MCF 10A (cell line): ENCODE measurements at regions of chr7 and their contacts with region 1.

Region 1: DNA sequence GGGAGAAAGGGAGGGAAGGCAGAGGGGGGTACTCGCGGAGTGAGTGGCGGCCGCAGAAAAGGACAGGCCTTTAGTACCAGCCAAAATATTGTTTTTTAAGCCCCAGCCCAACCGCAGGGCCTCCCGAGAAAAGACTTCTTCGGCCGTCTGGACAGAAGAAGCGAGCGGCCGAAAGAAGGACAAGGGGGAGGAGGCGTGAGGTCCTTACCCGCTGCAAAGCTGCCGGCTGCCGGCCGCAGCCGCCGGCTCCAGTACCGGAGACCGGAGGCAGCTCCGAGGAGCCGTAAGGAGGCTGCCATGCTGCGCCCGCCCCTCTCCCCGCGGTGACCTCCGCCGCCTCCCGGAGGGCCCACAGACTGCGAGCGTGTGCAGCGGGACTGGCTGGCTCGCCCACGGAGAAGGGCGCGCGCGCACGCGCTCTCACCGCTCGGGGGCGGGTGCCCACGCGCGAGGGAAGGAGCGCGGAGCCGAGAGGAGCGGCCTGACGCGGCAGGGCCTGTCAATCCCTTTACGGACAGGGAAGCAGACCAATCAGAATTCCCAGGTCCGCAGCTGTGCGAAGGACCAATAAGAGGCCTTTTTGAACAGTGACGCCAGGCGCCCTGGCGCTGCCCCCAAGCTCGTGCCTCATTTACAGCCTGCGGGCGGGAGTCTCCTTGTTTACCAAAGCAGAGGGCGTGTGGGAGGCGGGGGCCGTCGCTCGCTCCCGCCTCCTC is at the start of gene HIBADH:
- DNase-seq: peak; percentile 99
- H3K4me3 Mint-ChIP-seq: peak within 1 kb of the TSS; percentile 78
- H3K27ac Mint-ChIP-seq: peak within 1 kb of the TSS; percentile 82
- H3K4me1 Mint-ChIP-seq: no peaks in the 10 kb centered on the region
- H3K27me3 Mint-ChIP-seq: no peaks in the 10 kb centered on the region
- CTCF ChIP-seq: peak; percentile 16
- total RNA-seq, gene HIBADH: 51.5 and 61.1 TPM in 2 replicates

Region 2: GRCh38 chr7:27224983-27225934 is 437.4 kb before region 1 on chr7:
- CTCF ChIA-PET with region 1: no interaction called
- POLR2A ChIA-PET with region 1: no interaction called
- intact Hi-C with region 1: no loop called
- DNase-seq: no peak
- H3K4me3 Mint-ChIP-seq: no peak overlapping the region
- H3K27ac Mint-ChIP-seq: no peak overlapping the region
- H3K4me1 Mint-ChIP-seq: peaks cover 7% of the 10 kb centered on the region
- H3K27me3 Mint-ChIP-seq: no peaks in the 10 kb centered on the region
- CTCF ChIP-seq: no peak

Region 3: GRCh38 chr7:27605689-27606269 is 56.9 kb before region 1 on chr7:
- CTCF ChIA-PET with region 1: interaction called, 4 read pairs
- POLR2A ChIA-PET with region 1: interaction called, 10 read pairs
- intact Hi-C with region 1: no loop called
- DNase-seq: peak; percentile 38
- H3K4me3 Mint-ChIP-seq: no peak overlapping the region
- H3K27ac Mint-ChIP-seq: no peak overlapping the region
- H3K4me1 Mint-ChIP-seq: peaks cover 13% of the 10 kb centered on the region
- H3K27me3 Mint-ChIP-seq: no peaks in the 10 kb centered on the region
- CTCF ChIP-seq: peak; percentile 27

Region 4: DNA sequence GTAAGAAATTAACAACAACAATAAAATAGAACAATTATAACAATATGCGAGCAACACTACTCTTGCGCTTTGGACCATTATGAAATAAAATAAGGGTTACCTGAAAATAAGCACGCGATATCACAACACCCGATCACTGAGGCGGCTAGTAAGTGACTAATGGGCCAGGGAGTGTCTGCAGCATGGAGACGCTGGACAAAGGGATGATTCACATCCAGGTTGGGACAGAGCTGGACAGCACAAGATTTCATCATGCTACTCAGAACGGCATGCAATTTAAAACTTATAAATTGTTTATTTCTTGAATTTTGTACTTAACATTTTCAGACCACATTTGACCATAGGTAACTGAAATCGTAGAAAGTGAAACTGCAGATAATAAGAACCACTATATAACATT is 15.6 kb before region 1 on chr7:
- CTCF ChIA-PET with region 1: interaction called, 5 read pairs
- POLR2A ChIA-PET with region 1: interaction called, 72 read pairs
- intact Hi-C with region 1: no loop called
- DNase-seq: peak; percentile 95
- H3K4me3 Mint-ChIP-seq: peak overlapping the region; percentile 59
- H3K27ac Mint-ChIP-seq: peak overlapping the region; percentile 91
- H3K4me1 Mint-ChIP-seq: peaks cover 44% of the 10 kb centered on the region
- H3K27me3 Mint-ChIP-seq: no peaks in the 10 kb centered on the region
- CTCF ChIP-seq: no peak

Region 5: DNA sequence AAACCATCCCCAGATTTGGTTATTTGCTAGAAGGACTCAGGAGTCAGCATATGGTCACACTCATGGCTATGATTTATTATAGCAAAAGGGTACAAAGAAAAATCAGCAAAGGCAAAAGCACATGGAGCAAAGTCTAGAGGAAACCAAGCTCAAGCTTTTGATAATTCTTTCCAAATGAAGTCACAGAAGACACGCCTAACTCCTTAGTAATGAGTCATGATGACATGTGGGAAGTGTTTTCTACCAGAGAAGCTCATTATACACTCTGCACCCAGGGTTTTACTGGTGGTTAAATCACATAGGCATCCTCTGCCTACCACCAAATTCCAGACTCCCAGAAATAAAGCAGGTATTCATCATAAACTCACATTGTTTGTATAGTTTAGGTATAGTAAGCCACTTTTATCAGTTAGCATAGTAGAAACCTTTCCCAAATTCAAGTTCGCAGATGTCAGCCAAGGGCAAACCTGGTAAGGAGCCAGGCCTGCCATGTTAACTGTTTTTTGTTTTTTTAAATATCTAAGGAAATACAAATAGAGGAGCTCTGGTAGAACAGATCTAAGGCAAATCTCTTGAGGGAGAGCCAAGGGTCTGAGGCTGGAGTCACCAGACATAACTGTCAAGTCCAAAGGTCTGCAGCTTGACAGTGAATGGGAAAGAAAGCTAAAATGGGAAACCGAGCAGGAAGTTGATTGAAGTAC is 15.4 kb after region 1 on chr7:
- CTCF ChIA-PET with region 1: no interaction called
- POLR2A ChIA-PET with region 1: interaction called, 36 read pairs
- intact Hi-C with region 1: loop called (anchors 1 kb)
- DNase-seq: peak; percentile 78
- H3K4me3 Mint-ChIP-seq: peak overlapping the region; percentile 26
- H3K27ac Mint-ChIP-seq: peak overlapping the region; percentile 98
- H3K4me1 Mint-ChIP-seq: peaks cover 12% of the 10 kb centered on the region
- H3K27me3 Mint-ChIP-seq: no peaks in the 10 kb centered on the region
- CTCF ChIP-seq: no peak

Region 6: DNA sequence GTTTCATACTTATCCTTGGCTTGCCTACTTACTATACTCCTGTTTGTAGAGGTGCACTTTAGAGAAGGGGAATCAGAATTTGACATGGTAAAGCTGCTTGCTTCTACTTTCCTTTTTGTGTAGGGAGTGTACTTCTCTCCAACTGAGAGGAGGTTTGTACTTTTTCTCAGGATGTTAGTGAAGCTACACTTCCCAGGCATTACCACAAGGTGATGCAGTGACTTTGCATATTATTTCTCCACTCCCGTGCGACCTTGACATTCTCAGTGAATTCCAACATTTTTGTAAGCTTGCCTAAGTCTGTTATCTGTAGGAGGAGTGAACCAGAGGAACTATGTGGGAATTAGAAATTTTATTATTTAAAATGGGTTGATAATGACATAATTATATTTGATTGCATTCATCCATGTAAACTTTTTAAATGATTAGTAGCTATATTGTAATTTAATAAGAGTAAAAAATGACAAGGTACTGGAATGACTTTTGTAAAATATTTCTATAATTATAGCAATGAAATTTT is 82.5 kb after region 1 on chr7:
- CTCF ChIA-PET with region 1: interaction called, 5 read pairs
- POLR2A ChIA-PET with region 1: interaction called, 180 read pairs
- intact Hi-C with region 1: loop called (anchors 1 kb)
- DNase-seq: peak; percentile 62
- H3K4me3 Mint-ChIP-seq: no peak overlapping the region
- H3K27ac Mint-ChIP-seq: peak overlapping the region; percentile 77
- H3K4me1 Mint-ChIP-seq: peaks cover 32% of the 10 kb centered on the region
- H3K27me3 Mint-ChIP-seq: no peaks in the 10 kb centered on the region
- CTCF ChIP-seq: peak; percentile 63

Region 7: DNA sequence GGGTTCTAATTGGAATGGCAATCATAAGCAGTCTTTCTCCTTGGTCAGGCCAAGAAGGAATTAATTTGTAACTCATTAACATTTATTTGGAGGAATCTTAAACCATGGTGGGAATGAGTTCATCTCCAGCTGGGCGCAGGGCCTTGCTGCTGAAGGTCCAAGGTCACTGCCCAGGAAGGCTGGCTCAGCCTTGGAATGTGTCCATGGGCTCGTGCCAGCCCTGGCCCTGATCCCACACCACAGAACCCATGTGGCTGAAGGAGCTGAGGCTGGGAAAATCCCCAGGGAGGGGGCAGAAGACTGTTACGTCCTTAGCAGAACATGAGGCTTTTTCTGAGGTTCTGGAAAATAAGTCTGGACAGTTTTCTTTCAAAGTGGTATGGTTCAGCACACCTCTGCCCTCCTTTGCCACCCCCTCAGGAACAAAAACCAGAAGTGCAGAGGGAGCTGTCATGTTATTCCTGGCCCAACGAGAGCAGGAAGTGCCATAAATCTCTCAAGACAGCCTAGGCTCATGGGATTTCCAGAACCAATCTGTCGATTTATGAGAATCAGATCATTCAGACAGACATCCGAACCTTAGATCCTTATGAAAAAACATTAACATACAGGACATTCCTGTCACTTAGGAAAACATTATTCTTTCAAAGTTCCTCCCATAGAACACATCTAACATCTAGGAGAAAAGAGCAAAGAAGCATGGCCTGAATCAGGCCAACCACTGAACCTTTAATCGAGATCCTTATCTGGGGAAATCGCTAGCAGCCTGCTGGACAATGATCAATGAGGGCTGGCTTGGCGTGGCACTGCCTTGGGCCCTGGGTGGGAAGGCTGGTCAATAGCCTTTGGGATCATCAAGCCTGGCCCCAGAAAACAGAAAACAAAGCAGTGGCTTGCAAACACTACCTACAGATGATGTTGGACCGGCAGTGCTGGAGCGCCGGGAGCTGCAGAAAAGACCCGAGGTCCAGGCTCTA is 211.6 kb after region 1 on chr7:
- CTCF ChIA-PET with region 1: no interaction called
- POLR2A ChIA-PET with region 1: no interaction called
- intact Hi-C with region 1: no loop called
- DNase-seq: peak; percentile 84
- H3K4me3 Mint-ChIP-seq: no peak overlapping the region
- H3K27ac Mint-ChIP-seq: peak overlapping the region; percentile 61
- H3K4me1 Mint-ChIP-seq: peaks cover 20% of the 10 kb centered on the region
- H3K27me3 Mint-ChIP-seq: no peaks in the 10 kb centered on the region
- CTCF ChIP-seq: no peak